Caco-2 (cell line): ENCODE measurements at regions of chr22 and their contacts with region 1.

Region 1: DNA sequence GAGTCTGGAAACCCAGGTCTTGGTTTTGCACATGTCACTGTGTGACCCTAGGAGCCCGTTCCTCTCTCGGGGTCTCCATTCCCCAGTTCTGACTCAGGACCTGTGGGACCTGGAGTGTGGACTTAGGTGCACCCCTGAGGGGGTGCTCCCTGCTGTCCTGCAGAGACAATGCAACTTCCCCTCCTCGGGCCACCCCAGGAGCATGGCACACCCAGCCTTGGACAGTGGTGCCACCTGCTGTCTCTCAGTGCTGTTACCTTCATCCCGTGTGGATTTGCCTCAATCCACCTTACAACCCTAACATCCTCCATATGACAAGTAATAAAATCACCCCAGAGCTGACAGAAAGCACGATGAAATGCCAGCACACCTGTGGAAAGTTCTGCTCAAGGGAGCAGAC is 27.5 kb upstream of the CRYBB3 start:
- DNase-seq: peak in 1 of 2 experiments; percentile 43
- H3K4me3 ChIP-seq: no peak overlapping the region
- H3K4me3 Mint-ChIP-seq: no peak overlapping the region
- H3K27ac Mint-ChIP-seq: no peak overlapping the region
- H3K4me1 ChIP-seq: no peaks in the 10 kb centered on the region
- H3K4me1 Mint-ChIP-seq: no peaks in the 10 kb centered on the region
- H3K27me3 ChIP-seq: no peaks in the 10 kb centered on the region
- H3K27me3 Mint-ChIP-seq: no peaks in the 10 kb centered on the region
- CTCF ChIP-seq: peak in 1 of 2 experiments; percentile 36

Region 2: GRCh38 chr22:25081409-25081824 is 90.7 kb before region 1 on chr22:
- CTCF ChIA-PET with region 1: interaction called, 4 read pairs
- POLR2A ChIA-PET with region 1: interaction called, 4 read pairs
- intact Hi-C with region 1: loop called (anchors 1 kb)
- DNase-seq: peak; percentile 49 to 60
- H3K4me3 ChIP-seq: no peak overlapping the region
- H3K4me3 Mint-ChIP-seq: no peak overlapping the region
- H3K27ac Mint-ChIP-seq: peak overlapping the region; percentile 5
- H3K4me1 ChIP-seq: no peaks in the 10 kb centered on the region
- H3K4me1 Mint-ChIP-seq: peaks cover 12% of the 10 kb centered on the region
- H3K27me3 ChIP-seq: no peaks in the 10 kb centered on the region
- H3K27me3 Mint-ChIP-seq: no peaks in the 10 kb centered on the region
- CTCF ChIP-seq: peak; percentile 64 to 67